Lower lobe of right lung (tissue), 2 donors: ENCODE measurements at regions of chr5 and their contacts with region 1.

Region 1: DNA sequence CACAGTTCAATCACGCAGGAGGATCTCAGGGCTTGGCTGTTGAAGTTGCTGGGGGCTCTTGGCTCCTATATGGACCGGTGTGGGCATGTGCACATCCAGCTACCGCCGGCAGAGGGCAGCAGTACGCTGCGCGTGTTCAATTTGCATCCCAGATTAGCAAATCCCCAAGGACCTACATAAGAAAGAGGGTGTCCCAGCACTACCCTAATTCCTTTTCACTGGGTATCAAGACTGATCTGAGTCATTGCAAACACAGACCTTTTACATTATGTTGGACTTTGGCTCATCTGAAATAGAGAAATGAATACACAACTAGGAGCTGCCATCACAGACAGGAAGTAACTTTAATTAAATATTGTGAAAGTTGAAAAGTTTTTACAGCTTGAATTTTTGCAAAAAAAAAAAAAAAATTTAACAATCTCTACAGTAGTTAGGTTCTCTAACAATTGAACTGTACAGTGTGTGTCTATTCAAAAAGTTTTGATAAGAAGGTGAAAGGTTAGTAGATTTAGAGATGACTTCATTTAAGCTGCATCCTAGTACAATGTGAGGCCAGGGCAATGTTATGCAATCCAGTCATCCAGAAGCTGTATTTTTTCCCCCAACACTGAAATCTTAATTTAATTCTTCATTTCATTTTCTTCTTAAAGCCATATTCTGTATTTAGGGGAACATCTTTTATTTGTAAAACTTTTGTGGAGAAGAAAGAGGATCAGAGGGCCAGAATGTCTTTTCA is 404.0 kb downstream of the EBF1 start:
- DNase-seq: peak; percentile 77
- ATAC-seq: peak; percentile 86 to 89
- H3K4me3 ChIP-seq: no peak overlapping the region
- H3K27ac ChIP-seq: no peak overlapping the region
- H3K4me1 ChIP-seq: peaks cover 3% of the 10 kb centered on the region
- H3K27me3 ChIP-seq: no peaks in the 10 kb centered on the region
- CTCF ChIP-seq: peak; percentile 97

Region 2: DNA sequence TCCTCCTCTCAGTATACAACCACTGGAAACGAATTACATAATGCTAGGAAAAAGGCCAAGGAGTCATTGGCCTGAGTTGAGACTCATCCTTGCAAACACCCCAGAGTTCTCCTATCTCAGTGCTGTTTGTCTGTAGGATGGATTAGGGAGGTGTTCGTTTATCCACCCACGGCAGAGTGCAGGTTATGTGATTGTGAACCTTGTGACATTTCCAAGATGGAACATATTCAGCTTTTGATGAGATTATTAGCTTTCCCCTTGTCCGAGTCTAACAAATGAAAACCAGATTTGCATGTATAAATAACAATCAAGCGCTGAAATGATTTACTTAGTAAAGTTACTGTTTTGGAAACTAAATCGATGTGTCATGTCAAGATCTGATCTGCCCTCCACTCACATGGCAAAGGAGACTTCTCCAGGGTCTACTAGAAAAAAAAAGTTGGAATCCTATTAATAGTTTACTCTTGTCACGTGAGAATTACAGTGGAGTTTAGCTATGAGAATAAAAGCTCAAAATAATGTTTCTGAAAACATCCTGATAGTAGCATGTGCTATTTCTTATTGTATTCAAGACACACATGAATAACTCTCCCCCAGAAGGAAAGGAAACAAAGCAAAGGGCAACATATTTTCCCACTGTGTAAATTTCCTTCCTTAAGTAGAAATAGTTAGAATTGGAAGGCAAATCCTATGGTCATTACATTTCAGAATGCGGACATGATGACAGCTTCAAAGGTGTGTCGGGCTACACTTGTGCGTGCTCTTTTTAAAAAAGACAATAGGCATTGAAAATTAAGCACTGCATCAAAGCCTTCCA is 196.5 kb before region 1 on chr5:
- intact Hi-C with region 1: no loop called
- DNase-seq: no peak
- ATAC-seq: no peak
- H3K4me3 ChIP-seq: no peak overlapping the region
- H3K27ac ChIP-seq: no peak overlapping the region
- H3K4me1 ChIP-seq: no peaks in the 10 kb centered on the region
- H3K27me3 ChIP-seq: no peaks in the 10 kb centered on the region
- CTCF ChIP-seq: no peak

Region 3: DNA sequence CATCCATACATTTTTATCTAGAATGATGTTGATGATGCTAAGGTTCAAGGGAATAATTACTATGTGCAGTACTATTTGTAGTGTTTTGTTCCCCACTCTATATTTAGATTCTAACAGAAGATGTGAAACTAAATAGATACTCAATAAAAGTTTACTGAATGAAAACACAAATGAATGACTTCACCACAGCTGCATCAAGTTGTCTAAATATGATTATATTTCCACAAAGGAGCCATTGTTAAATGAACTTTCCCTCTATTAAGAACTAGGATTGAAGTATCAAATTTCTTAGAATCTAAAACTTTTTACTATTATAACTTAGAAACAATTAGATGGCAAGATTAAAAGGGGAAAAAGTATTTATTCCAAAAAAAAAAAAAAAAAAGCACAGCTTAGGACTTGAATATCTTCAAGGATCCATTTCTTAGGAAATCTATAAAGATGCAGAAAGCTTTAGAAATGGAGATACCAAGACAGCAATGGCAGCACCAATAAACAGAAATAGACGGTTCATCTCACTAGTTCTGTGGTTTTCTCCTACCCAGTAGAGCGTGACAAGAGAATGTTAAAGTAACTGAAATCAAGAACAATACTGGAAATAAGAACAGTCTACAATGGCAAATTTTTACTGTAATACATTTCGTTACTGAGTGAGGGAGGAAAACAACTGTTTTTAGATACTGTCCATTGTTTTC is 56.3 kb after region 1 on chr5:
- intact Hi-C with region 1: no loop called
- DNase-seq: no peak
- ATAC-seq: no peak
- H3K4me3 ChIP-seq: no peak overlapping the region
- H3K27ac ChIP-seq: no peak overlapping the region
- H3K4me1 ChIP-seq: no peaks in the 10 kb centered on the region
- H3K27me3 ChIP-seq: no peaks in the 10 kb centered on the region
- CTCF ChIP-seq: no peak

Region 4: GRCh38 chr5:159050316-159051143 is 354.8 kb after region 1 on chr5:
- intact Hi-C with region 1: no loop called
- DNase-seq: no peak
- ATAC-seq: no peak
- H3K4me3 ChIP-seq: peak overlapping the region; percentile 46
- H3K27ac ChIP-seq: peak overlapping the region; percentile 62
- H3K4me1 ChIP-seq: peaks cover 17% of the 10 kb centered on the region
- H3K27me3 ChIP-seq: peaks cover 28% of the 10 kb centered on the region
- CTCF ChIP-seq: no peak

Region 5: DNA sequence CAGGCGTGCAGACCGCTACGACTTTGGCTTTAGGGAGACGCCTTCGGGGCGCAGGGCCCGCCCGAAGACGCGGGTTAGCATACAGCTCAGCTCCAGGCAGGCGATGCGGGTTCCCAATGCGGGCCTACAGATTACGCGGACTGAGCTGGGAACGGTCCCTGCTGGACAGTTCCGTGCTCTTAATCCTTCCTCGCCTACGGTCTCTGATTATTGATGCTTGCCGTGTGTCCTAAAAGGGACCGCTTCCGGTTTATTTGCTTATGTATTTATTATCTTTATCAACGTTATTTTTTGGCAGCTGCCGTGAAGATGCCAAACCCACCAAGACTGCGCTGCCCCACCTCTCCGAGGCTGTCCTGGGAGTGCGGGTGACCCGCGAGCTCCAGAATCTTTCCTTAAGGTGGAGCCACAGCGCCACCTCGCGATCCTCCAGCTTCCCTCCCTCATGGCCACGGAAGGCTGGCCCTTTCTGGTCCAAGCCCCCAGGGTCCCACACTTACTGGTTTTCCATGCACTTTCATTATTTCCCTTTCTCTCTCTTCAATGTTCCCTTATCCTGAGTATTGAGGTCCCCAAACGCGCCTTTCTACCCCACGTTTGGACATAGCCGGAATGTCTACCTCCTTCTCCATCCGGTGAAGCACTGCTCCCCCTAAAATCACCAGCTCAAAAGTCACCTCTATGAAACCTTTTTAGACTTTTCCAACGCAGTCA is 411.0 kb after region 1 on chr5:
- intact Hi-C with region 1: loop called (anchors 5 kb)
- DNase-seq: peak; percentile 80
- ATAC-seq: peak; percentile 85 to 92
- H3K4me3 ChIP-seq: peak overlapping the region; percentile 39
- H3K27ac ChIP-seq: no peak overlapping the region
- H3K4me1 ChIP-seq: peaks cover 28% of the 10 kb centered on the region
- H3K27me3 ChIP-seq: peaks cover 66% of the 10 kb centered on the region
- CTCF ChIP-seq: peak; percentile 95